GM18951 (cell line): ENCODE measurements at regions of chr14 and their contacts with region 1.

Region 1: GRCh38 chr14:59918824-59919569 is 947 bp upstream of the LRRC9 start:
- POLR2A ChIP-seq: no peak

Region 2: GRCh38 chr14:59632381-59632780 is 286.6 kb before region 1 on chr14:
- in situ Hi-C with region 1: loop called (anchors 10 kb)
- POLR2A ChIP-seq: no peak